Heart right ventricle (tissue), 16 donors: ENCODE measurements at regions of chr1 and their contacts with region 1.

Region 1: GRCh38 chr1:206982216-206982615 is 12.0 kb upstream of the FCAMR start:
- DNase-seq: peak; percentile 24 to 45
- ATAC-seq: peak; percentile 49 to 87 (median 74)
- H3K4me3 ChIP-seq: no peak overlapping the region
- H3K27ac ChIP-seq: no peak overlapping the region
- H3K4me1 ChIP-seq: no peaks in the 10 kb centered on the region
- H3K27me3 ChIP-seq: peaks cover 0 to 27% (median 4%) of the 10 kb centered on the region in 7 donors
- CTCF ChIP-seq: peak; percentile 16 to 68 (median 57)

Region 2: DNA sequence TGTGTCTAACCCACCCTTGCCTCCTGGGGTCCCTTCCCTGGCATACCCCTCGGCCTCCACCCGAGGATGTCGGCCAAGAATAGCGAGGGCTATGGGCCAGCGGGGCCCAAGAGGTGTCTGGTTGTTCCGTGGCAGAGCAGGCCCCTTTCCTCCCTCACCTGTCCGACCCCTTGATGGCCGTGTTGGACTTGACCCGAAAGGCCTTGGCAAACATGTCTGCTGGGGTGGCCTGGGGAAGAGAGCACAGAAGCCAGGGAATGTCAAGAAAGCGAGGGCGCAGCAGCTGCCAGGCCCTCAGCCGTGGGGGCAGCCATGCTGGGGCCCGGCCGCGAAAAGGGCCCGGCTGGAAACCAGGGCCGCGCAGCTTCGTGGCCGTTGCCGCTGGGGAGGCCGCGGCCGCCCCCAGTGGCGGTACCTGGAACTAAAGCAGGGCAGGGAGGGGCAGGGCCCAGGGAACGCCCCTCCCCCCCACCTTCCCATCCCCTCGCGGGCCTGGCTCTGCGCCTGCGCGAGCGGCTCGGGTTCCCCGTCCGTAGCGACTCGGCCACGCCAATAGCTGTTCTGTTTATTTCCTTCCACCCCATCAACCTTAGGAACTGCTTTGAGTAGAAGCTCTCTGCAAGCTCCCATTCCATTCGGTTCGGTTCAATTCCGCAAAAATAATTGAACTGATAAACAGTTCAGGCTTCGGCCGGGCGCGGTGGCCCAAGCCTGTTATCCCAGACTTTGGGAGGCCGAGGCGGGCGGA is 369.9 kb before region 1 on chr1 and contains the start of gene EIF2D:
- intact Hi-C with region 1: loop called in 2 of 10 experiments (anchors 5 to 10 kb)
- DNase-seq: peak; percentile 94 to 96
- ATAC-seq: peak; percentile 97 to 99 (median 99)
- H3K4me3 ChIP-seq: peak within 1 kb of the TSS; percentile 65 to 96 (median 74)
- H3K27ac ChIP-seq: peak within 1 kb of the TSS; percentile 57 to 95 (median 88)
- H3K4me1 ChIP-seq: peaks cover 5 to 15% (median 10%) of the 10 kb centered on the region in 9 donors
- H3K27me3 ChIP-seq: no peaks in the 10 kb centered on the region
- CTCF ChIP-seq: peak in 8 of 9 donors; percentile 97 to 100 (median 99)
- total RNA-seq, gene EIF2D: 26.1 to 32.2 (median 29.5) TPM

Region 3: GRCh38 chr1:206628916-206629315 is 353.3 kb before region 1 on chr1:
- intact Hi-C with region 1: loop called in 7 of 10 experiments (anchors 2 to 10 kb)
- DNase-seq: no peak
- ATAC-seq: no peak
- H3K4me3 ChIP-seq: no peak overlapping the region
- H3K27ac ChIP-seq: no peak overlapping the region
- H3K4me1 ChIP-seq: peaks cover 0 to 15% (median 8%) of the 10 kb centered on the region in 9 donors
- H3K27me3 ChIP-seq: no peaks in the 10 kb centered on the region
- CTCF ChIP-seq: no peak